Spleen (tissue), 13 donors: ENCODE measurements at regions of chr1 and their contacts with region 1.

Region 1: GRCh38 chr1:36099681-36100341 is 11.1 kb downstream of the ADPRS start:
- DNase-seq: peak; percentile 91
- H3K4me3 ChIP-seq: peak overlapping the region in 1 of 8 donors; percentile 43
- H3K27ac ChIP-seq: peak overlapping the region in 2 of 8 donors; percentile 8 to 46
- H3K4me1 ChIP-seq: peaks cover 8 to 41% (median 31%) of the 10 kb centered on the region in 6 donors
- H3K27me3 ChIP-seq: no peaks in the 10 kb centered on the region
- CTCF ChIP-seq: peak; percentile 68 to 92 (median 87)
- POLR2A ChIP-seq: no peak

Region 2: DNA sequence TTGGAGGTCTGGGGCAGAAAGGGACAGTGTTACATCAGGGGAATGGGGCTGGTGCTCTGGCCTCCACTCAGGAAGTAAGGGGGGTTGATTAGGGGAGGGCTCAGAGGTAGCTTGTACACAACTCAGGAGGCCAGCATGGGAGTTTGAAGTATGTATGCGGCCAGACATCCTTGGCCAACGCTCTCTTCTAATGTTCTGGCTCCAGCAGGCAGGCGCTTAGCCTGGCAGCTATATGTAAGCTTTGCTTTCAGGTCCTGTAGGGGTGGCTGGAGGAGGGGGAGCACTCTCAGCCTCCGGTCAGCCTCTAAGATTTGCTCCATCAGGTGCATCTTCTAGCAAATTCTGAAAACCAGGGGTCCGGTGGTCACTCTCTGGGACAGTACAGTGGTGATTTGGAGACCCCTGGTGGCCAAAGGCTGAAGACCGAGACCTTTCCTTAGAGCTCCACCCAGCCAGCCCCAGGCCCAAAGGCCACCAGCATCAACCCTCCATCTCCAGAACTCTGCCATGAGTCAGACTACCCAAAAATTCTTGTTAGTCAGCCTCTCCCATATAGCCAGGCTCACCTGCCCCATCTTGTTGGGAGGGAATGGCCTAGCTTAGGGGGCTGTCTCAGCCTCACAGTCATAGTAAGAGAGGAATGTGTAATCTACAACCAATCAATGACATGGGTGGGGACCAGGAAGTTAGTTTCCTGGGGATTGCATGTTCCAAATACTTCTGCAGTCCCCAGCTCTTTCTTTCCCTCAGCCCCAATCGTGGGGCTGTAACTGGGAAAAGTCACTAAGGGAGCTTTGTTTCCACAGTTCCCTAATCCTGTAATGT is 34.9 kb after region 1 on chr1:
- intact Hi-C with region 1: loop called (anchors 5 kb)
- DNase-seq: no peak
- H3K4me3 ChIP-seq: no peak overlapping the region
- H3K27ac ChIP-seq: peak overlapping the region in 5 of 8 donors; percentile 0 to 62 (median 31)
- H3K4me1 ChIP-seq: peaks cover 2 to 35% (median 19%) of the 10 kb centered on the region in 6 donors
- H3K27me3 ChIP-seq: no peaks in the 10 kb centered on the region
- CTCF ChIP-seq: peak in 10 of 11 experiments; percentile 35 to 79 (median 64)
- POLR2A ChIP-seq: no peak

Region 3: GRCh38 chr1:36187800-36188593 is 88.2 kb after region 1 on chr1:
- intact Hi-C with region 1: loop called (anchors 2 kb)
- DNase-seq: peak; percentile 91
- H3K4me3 ChIP-seq: no peak overlapping the region
- H3K27ac ChIP-seq: peak overlapping the region; percentile 20 to 84 (median 74)
- H3K4me1 ChIP-seq: peaks cover 7 to 14% (median 9%) of the 10 kb centered on the region in 6 donors
- H3K27me3 ChIP-seq: no peaks in the 10 kb centered on the region
- CTCF ChIP-seq: peak; percentile 82 to 98 (median 93)
- POLR2A ChIP-seq: no peak

Region 4: DNA sequence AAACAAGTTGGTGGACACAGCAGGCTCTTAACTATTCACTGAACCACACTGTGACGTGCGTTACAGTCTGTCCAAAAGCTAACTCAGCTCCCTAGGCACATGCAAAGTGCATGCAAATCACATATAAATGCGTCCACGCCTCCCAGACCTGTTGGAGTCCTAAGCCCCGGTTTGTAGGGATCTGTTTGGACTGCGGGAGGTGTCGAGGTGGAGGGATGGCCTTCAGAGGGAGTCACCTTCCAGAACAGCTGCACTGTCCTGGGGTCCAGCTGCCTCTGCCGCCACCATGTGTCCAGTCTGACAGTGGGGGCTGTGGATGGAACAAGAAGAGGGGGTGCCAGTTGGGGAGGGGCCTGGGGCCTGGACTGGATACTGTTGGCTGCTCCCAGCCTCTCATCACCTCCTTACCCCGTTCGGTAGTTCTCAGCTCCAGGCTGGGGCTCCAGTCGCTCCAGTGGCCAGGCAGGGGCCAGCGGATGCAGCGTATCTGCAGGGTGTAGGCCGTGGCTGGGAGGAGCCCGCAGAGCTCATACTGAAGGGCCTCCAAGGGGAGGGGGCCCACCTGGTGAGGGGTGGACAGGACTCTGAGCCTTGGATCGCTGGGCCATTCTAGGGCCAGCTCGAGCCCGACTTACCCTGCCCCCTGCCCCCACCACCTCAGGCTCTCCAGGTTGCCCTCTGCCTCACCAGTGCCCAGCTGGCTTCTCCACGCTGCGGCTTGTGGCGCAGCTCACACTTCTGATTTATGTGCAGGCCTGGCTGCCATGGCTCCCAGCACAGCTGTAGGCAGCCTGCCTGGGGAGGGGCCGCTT is 372.2 kb after region 1 on chr1:
- intact Hi-C with region 1: no loop called
- DNase-seq: peak; percentile 69
- H3K4me3 ChIP-seq: no peak overlapping the region
- H3K27ac ChIP-seq: no peak overlapping the region
- H3K4me1 ChIP-seq: peaks cover 0 to 6% (median 0%) of the 10 kb centered on the region in 6 donors
- H3K27me3 ChIP-seq: no peaks in the 10 kb centered on the region
- CTCF ChIP-seq: no peak
- POLR2A ChIP-seq: no peak